ENCODE measurements at regions of chr5 and their contacts with region 1.

Region 1: GRCh38 chr5:132866342-132867045 is at the starts of genes GDF9 and UQCRQ:
- DNase-seq: peak; percentile 93

Region 2: GRCh38 chr5:132829742-132830435 is 36.6 kb before region 1 on chr5:
- CTCF ChIA-PET with region 1: interaction called, 3 read pairs
- POLR2A ChIA-PET with region 1: interaction called, 29 read pairs
- DNase-seq: peak; percentile 87

Region 3: GRCh38 chr5:132854301-132854700 is 12.2 kb before region 1 on chr5:
- CTCF ChIA-PET with region 1: interaction called, 4 read pairs
- POLR2A ChIA-PET with region 1: interaction called, 15 read pairs
- DNase-seq: no peak

Region 4: GRCh38 chr5:132877938-132878337 is 11.4 kb after region 1 on chr5:
- CTCF ChIA-PET with region 1: interaction called, 5 read pairs
- POLR2A ChIA-PET with region 1: interaction called, 20 read pairs
- DNase-seq: peak; percentile 23